ENCODE measurements at regions of chr3 and their contacts with region 1.

Region 1: DNA sequence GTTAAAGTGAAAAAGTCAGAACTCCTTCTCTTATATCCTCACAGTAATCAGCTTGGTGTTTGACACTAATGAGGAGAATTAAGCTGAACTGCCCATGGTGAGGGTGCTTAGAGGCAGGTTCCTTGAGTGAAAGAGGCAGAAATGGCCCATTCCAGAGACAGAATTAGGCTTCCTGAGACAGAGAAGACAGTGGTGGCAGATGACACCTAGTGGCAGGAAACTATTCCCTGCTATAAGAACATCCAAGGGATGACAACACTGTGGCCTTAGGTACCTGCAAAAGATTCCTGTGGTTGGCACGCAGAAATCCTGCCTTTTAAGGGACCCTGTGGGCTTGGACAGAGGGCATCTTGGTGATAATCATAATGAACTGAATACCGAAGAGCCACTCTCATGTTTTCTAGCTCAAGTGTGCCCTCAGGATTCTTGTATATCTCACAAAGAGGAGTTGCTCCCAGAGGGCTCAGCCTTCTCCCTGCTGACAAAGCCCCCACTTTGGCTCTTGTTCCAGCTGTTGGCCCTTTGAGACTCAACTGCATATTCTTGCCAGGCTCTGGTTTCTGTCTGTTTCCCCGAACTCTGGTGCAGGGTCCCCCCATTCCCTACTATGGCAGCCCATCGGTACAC is 56.0 kb downstream of the KBTBD12 start:
- DNase-seq: peak; percentile 46 to 63
- ATAC-seq: peak; percentile 93 to 95
- H3K4me3 ChIP-seq: no peak overlapping the region
- H3K27ac ChIP-seq: no peak overlapping the region
- H3K4me1 ChIP-seq: no peaks in the 10 kb centered on the region
- CTCF ChIP-seq: peak; percentile 74
- EP300 ChIP-seq: no peak
- POLR2A ChIP-seq: no peak
- RAD21 ChIP-seq: peak; percentile 81 to 89

Region 2: DNA sequence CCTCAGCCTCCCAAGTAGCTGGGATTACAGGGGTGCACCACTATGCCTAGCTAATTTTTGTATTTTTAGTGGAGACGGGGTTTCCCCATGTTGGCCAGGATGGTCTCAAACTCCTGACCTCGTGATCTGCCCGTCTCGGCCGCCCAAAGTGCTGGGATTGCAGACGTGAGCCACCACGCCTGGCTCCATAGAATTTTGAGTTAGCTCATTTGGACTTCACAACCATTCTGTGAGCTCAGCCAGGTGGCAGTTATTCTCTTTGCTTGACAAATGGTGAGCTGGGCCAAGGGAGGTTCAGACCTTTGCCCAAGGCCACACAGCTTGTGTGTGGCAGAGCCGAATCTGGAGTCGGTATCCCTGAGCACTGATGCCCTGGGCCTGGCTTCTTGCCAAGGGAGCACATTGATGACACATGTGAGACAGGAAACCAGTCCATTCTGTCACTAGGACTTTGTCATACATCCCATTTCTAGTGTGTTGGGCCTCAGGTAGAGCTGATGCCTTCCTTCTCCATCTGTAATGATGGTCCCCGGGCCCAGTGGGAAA is 324.5 kb before region 1 on chr3:
- CTCF ChIA-PET with region 1: interaction called, 29 read pairs
- POLR2A ChIA-PET with region 1: no interaction called
- DNase-seq: no peak
- ATAC-seq: no peak
- H3K4me3 ChIP-seq: no peak overlapping the region
- H3K27ac ChIP-seq: no peak overlapping the region
- H3K4me1 ChIP-seq: no peaks in the 10 kb centered on the region
- CTCF ChIP-seq: no peak
- EP300 ChIP-seq: no peak
- POLR2A ChIP-seq: no peak
- RAD21 ChIP-seq: no peak

Region 3: DNA sequence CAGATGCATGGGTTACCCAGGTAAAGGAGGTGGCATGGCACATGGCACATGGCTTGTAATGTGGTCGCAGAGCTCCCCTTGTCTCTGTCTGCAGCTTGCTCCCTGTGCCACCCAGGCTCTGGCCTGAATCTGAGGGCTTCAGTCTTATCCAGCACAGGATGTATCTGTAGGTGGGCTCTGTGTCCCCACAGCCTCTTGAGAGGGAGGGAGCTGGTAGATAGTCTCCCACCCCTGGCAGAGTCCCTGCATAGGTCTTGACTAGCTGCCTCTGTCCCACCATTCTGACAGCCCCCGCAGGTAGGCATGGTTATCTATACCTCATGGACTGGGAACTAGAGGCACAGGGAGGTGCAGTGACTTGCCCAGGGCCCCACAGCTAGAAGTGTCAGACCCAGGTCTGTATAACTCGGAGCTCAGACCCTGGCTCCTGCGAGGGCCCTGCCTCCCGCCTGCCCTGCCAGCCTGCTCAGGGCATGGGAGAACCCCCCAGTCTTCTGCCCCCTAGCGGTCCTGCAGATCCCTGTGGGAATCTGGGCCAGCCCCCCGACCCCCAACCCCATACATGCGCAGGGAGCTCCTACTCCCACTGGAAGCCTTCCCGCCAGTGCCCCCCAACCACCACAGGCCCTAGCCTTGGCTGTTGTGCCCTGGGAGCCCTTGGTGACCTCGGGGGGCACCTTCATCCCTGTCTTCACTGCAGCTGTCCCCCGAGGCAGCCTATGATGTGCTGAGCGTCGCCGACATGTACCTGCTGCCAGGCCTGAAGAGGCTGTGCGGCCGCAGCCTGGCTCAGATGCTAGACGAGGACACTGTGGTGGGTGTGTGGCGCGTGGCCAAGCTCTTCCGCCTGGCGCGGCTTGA is 291.6 kb before region 1 on chr3:
- CTCF ChIA-PET with region 1: interaction called, 17 read pairs
- POLR2A ChIA-PET with region 1: no interaction called
- DNase-seq: no peak
- ATAC-seq: peak in 1 of 2 experiments; percentile 14; a peak in 1 of 6 replicates
- H3K4me3 ChIP-seq: no peak overlapping the region
- H3K27ac ChIP-seq: no peak overlapping the region
- H3K4me1 ChIP-seq: no peaks in the 10 kb centered on the region
- CTCF ChIP-seq: no peak
- EP300 ChIP-seq: no peak
- POLR2A ChIP-seq: no peak
- RAD21 ChIP-seq: no peak

Region 4: DNA sequence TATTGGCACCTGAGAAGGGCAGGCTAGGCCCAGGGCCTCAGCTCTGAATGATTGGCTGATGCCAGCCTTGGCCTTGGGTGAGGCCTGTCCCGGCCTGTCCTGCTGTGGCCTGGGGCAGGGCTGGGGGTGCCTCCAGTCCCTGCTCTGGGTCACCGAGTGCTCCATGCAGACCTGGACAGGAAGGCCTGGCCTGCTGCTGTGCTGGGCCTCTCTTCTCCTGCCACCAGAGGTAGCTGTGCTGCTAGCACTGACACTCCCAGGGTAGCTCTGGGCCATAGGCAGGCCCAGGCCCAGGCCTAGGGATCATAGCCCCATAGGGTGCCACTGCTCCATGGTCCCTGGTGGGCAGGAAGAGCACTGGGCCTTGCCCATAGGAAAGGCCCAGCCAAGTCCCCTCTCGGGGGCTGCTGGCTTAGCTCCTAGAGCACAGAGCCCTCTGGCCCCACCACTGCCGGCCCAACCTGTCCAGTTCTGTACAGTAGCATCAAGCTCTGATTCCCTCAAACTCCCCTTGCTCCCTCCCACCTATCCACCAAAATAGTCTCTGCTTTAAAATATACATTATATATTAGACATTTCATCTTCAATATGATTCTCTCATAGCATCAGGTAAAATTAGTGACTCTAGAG is 280.1 kb before region 1 on chr3:
- CTCF ChIA-PET with region 1: interaction called, 13 read pairs
- POLR2A ChIA-PET with region 1: no interaction called
- DNase-seq: peak; percentile 7 to 75
- ATAC-seq: peak; percentile 90 to 96
- H3K4me3 ChIP-seq: no peak overlapping the region
- H3K27ac ChIP-seq: peak overlapping the region; percentile 72 to 90
- H3K4me1 ChIP-seq: peaks cover 51% of the 10 kb centered on the region
- CTCF ChIP-seq: peak; percentile 46; the same call in 2 of the 3 replicates
- EP300 ChIP-seq: no peak
- POLR2A ChIP-seq: no peak
- RAD21 ChIP-seq: peak; percentile 65 to 75

Region 5: DNA sequence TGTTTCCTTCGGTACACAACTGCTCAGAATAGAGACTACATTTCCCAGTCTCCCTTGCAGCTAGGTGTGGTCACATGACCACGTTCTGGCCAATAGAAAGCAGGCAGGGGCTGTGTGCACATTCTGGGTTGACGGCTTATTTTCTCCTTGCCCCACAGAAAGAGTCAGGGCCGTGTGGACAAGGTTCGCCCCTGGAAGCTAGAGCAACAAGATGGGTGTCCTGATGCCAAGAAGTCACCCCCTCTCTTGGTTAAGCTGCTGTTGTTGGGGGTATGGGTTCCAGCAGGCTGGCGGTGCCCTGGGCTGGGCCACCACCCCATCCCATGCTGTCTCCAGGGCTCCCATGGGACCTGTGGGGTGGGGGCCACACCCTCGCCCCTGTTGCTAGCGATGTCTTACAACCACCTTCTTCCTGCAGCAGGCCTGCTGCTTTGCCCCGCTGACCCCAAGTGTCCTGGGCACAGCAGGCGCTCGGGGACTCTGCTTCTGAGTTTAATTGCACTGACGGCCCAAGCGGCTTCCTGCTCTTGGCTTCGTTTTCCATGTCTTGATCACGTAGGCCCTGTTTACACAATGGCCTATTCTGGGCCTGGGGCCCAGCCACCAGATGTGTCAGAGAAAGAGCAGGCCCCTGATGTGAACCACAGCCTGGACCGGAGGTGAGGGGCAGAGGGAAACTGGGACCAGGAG is 273.4 kb before region 1 on chr3:
- CTCF ChIA-PET with region 1: interaction called, 10 read pairs
- POLR2A ChIA-PET with region 1: no interaction called
- DNase-seq: peak; percentile 28 to 71
- ATAC-seq: peak; percentile 66 to 85; a peak in 5 of 6 replicates
- H3K4me3 ChIP-seq: no peak overlapping the region
- H3K27ac ChIP-seq: peak overlapping the region; percentile 68 to 87; a peak in 5 of 6 replicates
- H3K4me1 ChIP-seq: peaks cover 65% of the 10 kb centered on the region
- CTCF ChIP-seq: no peak
- EP300 ChIP-seq: no peak
- POLR2A ChIP-seq: no peak
- RAD21 ChIP-seq: no peak

Region 6: DNA sequence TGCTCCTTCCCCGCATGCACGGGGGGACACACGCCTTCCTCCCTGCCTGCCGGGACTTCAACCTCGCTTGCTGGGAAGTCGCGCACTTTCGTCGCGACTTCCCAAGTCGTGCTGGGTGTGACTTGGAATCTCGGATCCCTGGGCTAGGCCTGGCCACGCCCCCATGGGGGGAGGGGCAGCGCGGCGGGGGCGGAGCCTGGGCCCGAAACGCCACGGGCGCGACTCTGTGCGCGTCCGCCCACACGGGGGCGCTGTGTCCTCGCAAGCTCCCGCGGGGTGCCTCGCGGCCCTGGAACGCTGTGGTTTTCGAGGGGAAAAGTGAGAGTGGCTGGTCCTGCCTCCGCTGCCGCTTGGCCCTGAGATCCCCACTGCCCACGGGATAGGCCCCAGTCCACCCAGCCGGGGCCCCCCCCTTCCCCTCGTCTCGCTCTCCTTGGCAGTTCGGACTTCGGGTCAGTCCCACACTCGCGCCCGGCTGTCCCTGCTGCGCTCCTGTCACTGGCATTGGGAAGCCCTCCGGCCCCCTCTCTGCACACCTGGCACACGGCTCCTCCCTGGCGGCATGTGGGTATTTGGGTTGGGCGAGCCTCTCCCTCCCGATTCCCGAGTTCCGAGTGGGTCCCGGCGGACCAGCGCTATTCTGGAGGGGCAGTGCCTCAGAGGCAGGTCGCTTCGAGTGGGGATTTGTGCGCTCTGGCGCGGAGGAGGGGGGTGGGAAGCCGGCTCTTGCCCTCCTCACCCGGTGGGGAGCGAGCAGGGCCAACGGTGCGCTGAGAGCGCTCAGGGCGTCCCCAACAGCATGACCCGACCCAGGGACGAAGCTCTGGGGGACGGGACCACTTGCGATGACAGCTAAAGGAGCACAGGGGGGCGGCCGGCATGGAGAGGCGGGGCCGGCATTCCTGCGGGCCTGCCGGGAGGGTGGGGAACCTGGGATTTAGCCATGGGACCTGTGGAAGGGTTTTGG is 104.7 kb after region 1 on chr3:
- CTCF ChIA-PET with region 1: no interaction called
- POLR2A ChIA-PET with region 1: no interaction called
- DNase-seq: peak; percentile 40 to 77
- ATAC-seq: peak; percentile 44 to 86
- H3K4me3 ChIP-seq: 0 out of 3 replicates have a peak overlapping the region, but pooled peaks have one; percentile 21
- H3K27ac ChIP-seq: peak overlapping the region; percentile 53 to 64; a peak in 5 of 6 replicates
- H3K4me1 ChIP-seq: peaks cover 29% of the 10 kb centered on the region
- CTCF ChIP-seq: peak; percentile 77
- EP300 ChIP-seq: no peak
- POLR2A ChIP-seq: no peak
- RAD21 ChIP-seq: peak; percentile 61 to 68